ENCODE measurements at regions of chr6 and their contacts with region 1.

Region 1: DNA sequence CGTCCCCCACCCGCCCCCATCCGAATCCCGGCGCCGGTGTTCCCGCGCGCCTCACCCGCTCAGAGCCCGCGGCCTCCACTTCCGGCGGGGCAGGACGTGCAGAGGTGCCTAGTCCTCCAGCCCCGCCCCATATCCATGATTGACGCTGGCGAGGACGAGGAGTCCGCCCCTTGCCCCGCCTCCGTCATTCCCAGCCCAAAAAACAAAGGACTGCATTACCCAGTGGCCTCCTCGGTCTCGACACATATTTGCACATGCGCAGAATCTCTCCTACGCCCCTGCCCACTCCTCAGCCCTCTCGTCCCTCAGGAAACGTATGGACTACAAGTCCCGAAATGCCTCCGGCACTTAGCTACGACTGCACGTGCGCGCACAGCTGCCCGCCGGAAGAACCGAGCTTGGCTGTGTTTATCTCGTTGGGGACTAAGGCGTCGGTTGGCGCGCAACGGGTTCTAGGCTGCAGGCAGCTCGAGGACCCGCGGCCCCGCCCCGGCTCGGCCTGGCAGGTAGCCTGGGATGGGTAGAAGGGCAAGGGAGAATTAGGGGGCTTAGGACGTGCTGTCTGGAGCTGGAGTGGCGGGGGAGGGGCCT is at the starts of genes KLHDC3 and MEA1:
- DNase-seq: peak; percentile 97 to 100 (median 99)
- H3K4me3 ChIP-seq: peak within 1 kb of the TSS; percentile 81
- H3K4me3 Mint-ChIP-seq: peak within 1 kb of the TSS; percentile 86 to 96 (median 90)
- H3K27ac ChIP-seq: peak within 1 kb of the TSS; percentile 81
- H3K27ac Mint-ChIP-seq: peak within 1 kb of the TSS; percentile 59 to 97 (median 92)
- H3K4me1 ChIP-seq: peaks cover 42% of the 10 kb centered on the region
- H3K4me1 Mint-ChIP-seq: peaks cover 48 to 70% (median 54%) of the 10 kb centered on the region in 3 donors
- H3K27me3 ChIP-seq: no peaks in the 10 kb centered on the region
- H3K27me3 Mint-ChIP-seq: peaks cover 0 to 2% of the 10 kb centered on the region in 2 donors
- total RNA-seq, gene KLHDC3: 73.5 to 74.1 TPM
- total RNA-seq, gene MEA1: 102 to 108 TPM

Region 2: DNA sequence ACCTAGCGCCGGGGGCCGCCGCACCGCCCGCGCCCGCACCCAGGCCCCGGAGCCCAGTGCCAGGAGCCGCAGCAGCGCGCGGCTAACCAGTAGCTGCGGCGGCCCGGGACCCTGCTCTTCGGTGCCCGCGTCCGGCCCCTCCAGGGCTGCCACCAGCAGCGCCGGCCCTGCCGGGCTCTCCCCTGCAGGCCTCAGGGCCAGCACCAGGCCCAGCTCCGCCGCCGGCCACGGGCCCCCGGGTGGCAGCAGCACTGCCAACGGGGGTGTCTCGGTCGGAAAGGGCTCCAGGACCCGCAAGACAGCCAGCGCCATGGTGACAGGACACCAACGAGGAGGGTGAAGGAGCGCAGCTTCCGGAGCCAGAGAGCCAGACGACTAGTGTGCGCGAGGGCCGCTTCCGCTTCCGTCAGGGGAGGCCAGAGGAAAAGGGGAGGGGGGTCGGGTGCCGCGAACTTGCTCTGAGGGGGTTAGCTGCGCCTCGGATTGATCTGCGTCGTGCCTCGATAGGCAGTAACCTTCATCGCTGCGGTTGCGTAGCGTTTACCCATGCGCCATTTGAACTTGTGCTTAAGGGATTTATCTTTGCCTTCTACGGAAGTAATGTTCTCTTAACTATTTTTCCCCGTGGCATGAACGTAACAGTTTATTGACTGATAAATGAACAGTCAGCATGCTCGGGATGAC is 35.0 kb before region 1 on chr6 and contains the start of gene PEX6:
- CTCF ChIA-PET with region 1: interaction called, 10 read pairs
- POLR2A ChIA-PET with region 1: interaction called, 18 read pairs
- DNase-seq: peak; percentile 90 to 97 (median 94)
- H3K4me3 ChIP-seq: peak within 1 kb of the TSS; percentile 80
- H3K4me3 Mint-ChIP-seq: peak within 1 kb of the TSS; percentile 87 to 96 (median 94)
- H3K27ac ChIP-seq: peak within 1 kb of the TSS; percentile 79
- H3K27ac Mint-ChIP-seq: peak within 1 kb of the TSS; percentile 94 to 99 (median 97)
- H3K4me1 ChIP-seq: peaks cover 47% of the 10 kb centered on the region
- H3K4me1 Mint-ChIP-seq: peaks cover 36 to 61% (median 50%) of the 10 kb centered on the region in 3 donors
- H3K27me3 ChIP-seq: no peaks in the 10 kb centered on the region
- H3K27me3 Mint-ChIP-seq: no peaks in the 10 kb centered on the region
- total RNA-seq, gene PEX6: 19.2 to 20.6 TPM

Region 3: GRCh38 chr6:42984001-42984923 is 29.7 kb before region 1 on chr6 and contains the start of gene PPP2R5D:
- CTCF ChIA-PET with region 1: interaction called, 10 read pairs
- POLR2A ChIA-PET with region 1: interaction called, 18 read pairs
- DNase-seq: peak; percentile 93 to 98 (median 97)
- H3K4me3 ChIP-seq: peak within 1 kb of the TSS; percentile 88
- H3K4me3 Mint-ChIP-seq: peak within 1 kb of the TSS; percentile 82 to 96 (median 93)
- H3K27ac ChIP-seq: peak within 1 kb of the TSS; percentile 87
- H3K27ac Mint-ChIP-seq: peak within 1 kb of the TSS; percentile 90 to 98 (median 96)
- H3K4me1 ChIP-seq: peaks cover 53% of the 10 kb centered on the region
- H3K4me1 Mint-ChIP-seq: peaks cover 59 to 73% (median 60%) of the 10 kb centered on the region in 3 donors
- H3K27me3 ChIP-seq: no peaks in the 10 kb centered on the region
- H3K27me3 Mint-ChIP-seq: peaks cover 0 to 2% of the 10 kb centered on the region in 2 donors
- total RNA-seq, gene PPP2R5D: 52.2 to 52.4 TPM

Region 4: DNA sequence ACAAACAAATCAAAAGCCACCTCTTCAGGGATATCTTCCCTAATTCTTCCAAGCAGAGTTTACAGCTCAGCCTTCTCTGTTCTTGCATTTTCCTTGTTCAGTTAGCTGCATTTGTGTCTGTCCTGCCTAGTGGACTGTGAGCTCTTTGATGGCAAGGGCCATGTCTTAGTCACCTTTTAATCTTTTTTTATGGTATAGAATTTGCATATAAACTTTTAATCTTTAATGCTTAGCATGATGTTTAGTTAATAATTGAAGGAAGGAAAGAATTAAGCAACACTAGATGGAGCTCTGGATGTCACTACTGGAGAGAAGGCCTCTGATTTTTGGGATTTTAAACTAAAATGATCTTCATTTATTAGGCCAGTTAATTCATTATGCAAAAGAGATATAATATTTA is 17.4 kb before region 1 on chr6:
- CTCF ChIA-PET with region 1: no interaction called
- POLR2A ChIA-PET with region 1: no interaction called
- DNase-seq: no peak
- H3K4me3 ChIP-seq: no peak overlapping the region
- H3K4me3 Mint-ChIP-seq: no peak overlapping the region
- H3K27ac ChIP-seq: no peak overlapping the region
- H3K27ac Mint-ChIP-seq: peak overlapping the region in 4 of 8 donors; percentile 1 to 45 (median 38)
- H3K4me1 ChIP-seq: no peaks in the 10 kb centered on the region
- H3K4me1 Mint-ChIP-seq: peaks cover 10 to 22% (median 12%) of the 10 kb centered on the region in 3 donors
- H3K27me3 ChIP-seq: no peaks in the 10 kb centered on the region
- H3K27me3 Mint-ChIP-seq: no peaks in the 10 kb centered on the region

Region 5: GRCh38 chr6:43053545-43054205 is 39.7 kb after region 1 on chr6 and contains the start of gene CUL7:
- CTCF ChIA-PET with region 1: interaction called, 4 read pairs
- POLR2A ChIA-PET with region 1: interaction called, 24 read pairs
- DNase-seq: peak; percentile 85 to 93 (median 89)
- H3K4me3 ChIP-seq: peak within 1 kb of the TSS; percentile 55
- H3K4me3 Mint-ChIP-seq: peak within 1 kb of the TSS; percentile 89 to 97 (median 92)
- H3K27ac ChIP-seq: peak within 1 kb of the TSS; percentile 88
- H3K27ac Mint-ChIP-seq: peak within 1 kb of the TSS; percentile 93 to 100 (median 96)
- H3K4me1 ChIP-seq: peaks cover 27% of the 10 kb centered on the region
- H3K4me1 Mint-ChIP-seq: peaks cover 36 to 56% (median 55%) of the 10 kb centered on the region in 3 donors
- H3K27me3 ChIP-seq: no peaks in the 10 kb centered on the region
- H3K27me3 Mint-ChIP-seq: peaks cover 0 to 2% of the 10 kb centered on the region in 2 donors
- total RNA-seq, gene CUL7: 11.7 to 12.1 TPM

Region 6: DNA sequence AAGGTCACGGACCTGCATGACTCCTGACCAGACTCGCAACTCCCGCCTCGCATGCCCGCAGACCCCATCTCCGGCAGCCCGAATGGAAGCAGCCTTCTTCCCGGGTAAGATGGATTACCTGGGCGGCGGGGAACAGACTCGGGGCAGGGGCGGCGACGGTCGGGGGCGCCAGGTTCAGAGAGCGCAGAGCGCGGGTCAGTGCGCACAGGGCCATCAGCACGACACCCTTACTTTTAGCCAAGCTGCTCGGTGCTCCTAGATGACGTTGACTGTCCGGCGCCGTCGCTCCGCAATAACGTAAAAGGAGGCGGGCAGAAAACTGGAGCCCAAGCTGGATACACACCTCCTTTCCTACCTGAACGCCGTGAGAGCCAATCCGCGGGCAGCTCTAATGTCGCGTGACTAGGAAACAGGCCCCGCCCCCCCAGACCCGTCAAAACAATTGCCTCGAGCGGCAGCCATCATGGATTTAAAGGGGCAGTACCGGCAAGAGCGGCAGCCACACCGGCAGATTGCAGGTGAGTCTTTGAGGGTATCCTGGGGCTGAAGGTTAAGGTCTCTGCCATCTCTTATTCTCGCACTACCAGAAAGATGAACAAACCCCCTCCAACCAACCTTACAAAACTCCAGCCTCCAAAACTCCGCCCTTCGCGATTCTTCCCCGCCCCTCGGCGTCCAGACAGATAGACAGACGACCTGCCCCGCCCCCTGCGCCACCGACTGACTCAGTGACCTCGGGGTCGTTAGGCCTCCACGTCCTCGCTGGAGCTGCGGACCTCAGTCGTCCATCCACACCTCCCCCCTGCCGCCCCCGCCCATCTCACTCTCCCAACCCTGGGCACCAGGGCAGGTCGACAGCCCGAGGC is 45.5 kb after region 1 on chr6 and contains the starts of genes KLC4 and MRPL2:
- CTCF ChIA-PET with region 1: interaction called, 4 read pairs
- POLR2A ChIA-PET with region 1: interaction called, 24 read pairs
- DNase-seq: peak; percentile 95 to 97 (median 96)
- H3K4me3 ChIP-seq: peak within 1 kb of the TSS; percentile 93
- H3K4me3 Mint-ChIP-seq: peak within 1 kb of the TSS; percentile 95 to 99 (median 98)
- H3K27ac ChIP-seq: peak within 1 kb of the TSS; percentile 94
- H3K27ac Mint-ChIP-seq: peak within 1 kb of the TSS; percentile 98 to 100 (median 100)
- H3K4me1 ChIP-seq: peaks cover 23% of the 10 kb centered on the region
- H3K4me1 Mint-ChIP-seq: peaks cover 32 to 54% (median 50%) of the 10 kb centered on the region in 3 donors
- H3K27me3 ChIP-seq: no peaks in the 10 kb centered on the region
- H3K27me3 Mint-ChIP-seq: no peaks in the 10 kb centered on the region
- total RNA-seq, gene KLC4: 11.1 to 12.3 TPM
- total RNA-seq, gene MRPL2: 89.6 to 91.6 TPM

Region 7: DNA sequence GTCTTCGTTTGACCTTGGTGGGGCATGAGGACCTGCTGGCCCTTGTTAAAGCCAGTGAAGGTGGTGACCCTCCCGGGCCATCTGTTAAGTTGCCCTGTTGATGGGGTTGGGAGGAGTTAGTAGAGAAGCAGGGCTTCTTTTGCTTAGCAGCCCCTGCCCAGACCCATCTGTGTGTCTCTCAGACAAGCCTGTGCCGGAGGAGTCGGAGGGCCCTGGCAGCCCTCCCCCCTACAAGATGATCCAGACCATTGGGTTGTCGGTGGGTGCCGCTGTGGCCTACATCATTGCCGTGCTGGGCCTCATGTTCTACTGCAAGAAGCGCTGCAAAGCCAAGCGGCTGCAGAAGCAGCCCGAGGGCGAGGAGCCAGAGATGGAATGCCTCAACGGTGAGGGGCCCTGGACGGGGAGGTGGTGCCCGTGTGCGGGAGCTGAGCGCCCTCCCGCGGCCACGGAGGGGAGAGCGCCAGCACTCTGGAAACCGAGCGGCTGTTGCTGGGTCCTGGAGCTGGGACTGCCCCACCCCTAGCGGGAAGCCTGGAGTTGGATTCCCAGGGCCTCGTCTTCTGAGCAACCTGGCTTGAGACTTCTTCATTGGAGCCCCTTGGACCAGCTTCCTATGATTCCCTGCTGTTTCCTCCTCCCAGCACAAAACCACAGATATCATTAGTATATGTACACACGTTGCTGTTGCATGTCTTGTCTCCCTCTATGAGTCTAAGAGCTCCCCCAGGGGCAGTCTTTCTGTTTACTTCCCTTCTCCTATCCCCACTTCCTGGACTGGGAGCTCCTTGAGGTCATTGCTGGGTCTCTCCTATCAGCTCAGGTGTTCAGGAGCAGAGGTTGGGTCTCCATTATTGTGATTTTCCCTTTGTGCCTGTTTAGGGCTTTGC is 129.5 kb after region 1 on chr6:
- CTCF ChIA-PET with region 1: interaction called, 17 read pairs
- POLR2A ChIA-PET with region 1: no interaction called
- DNase-seq: peak; percentile 64 to 86 (median 73)
- H3K4me3 ChIP-seq: peak overlapping the region; percentile 29
- H3K4me3 Mint-ChIP-seq: peak overlapping the region; percentile 43 to 81 (median 65)
- H3K27ac ChIP-seq: no peak overlapping the region
- H3K27ac Mint-ChIP-seq: peak overlapping the region in 7 of 8 donors; percentile 13 to 91 (median 75)
- H3K4me1 ChIP-seq: peaks cover 21% of the 10 kb centered on the region
- H3K4me1 Mint-ChIP-seq: peaks cover 21 to 27% (median 26%) of the 10 kb centered on the region in 3 donors
- H3K27me3 ChIP-seq: no peaks in the 10 kb centered on the region
- H3K27me3 Mint-ChIP-seq: peaks cover 2 to 6% of the 10 kb centered on the region in 2 donors

Region 8: DNA sequence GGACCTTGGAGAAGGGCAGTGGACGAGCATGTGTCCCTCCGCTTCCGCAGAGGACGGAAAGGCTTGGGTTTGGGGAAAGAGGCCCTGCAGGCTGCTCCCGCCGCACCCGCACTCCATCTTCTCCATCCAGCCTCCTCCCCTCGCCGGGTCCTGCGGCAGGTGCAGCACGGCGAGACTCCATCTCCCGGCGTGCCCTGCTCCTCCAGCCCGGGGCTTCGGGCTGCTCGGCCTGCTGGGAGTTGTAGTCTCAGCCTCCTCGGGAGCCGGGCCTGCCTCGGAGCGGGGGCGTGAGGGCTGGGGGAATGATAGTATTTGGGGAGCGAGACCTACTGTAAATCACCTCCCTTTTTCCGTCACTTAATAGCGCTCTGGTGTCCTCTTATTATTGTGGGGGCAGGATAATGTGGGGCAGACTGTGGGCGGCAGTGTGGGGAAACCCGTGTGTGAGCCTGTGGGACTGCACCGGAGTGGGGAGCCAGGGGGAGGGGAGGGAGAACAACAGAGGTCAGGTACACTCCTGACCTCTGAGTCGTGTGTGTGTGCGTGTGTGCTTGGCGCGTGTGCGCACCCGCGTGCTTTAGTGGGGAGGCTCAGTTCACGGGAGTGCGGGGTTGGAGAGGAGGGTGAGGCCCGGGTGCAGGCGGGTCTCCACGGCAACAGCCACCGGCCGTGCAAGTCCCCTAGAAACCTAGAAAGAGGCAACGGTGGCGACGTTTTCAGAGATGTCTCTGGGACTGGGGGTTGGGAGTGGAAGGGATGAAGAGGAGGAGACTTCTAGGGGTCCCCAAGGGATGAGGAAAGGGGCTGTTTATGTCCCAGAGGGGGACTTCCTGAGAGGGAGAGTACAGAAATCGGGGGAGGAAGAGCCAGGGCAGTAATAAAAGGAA is 233.4 kb after region 1 on chr6:
- CTCF ChIA-PET with region 1: no interaction called
- POLR2A ChIA-PET with region 1: no interaction called
- DNase-seq: peak; percentile 66 to 85 (median 70)
- H3K4me3 ChIP-seq: peak overlapping the region; percentile 87
- H3K4me3 Mint-ChIP-seq: peak overlapping the region; percentile 86 to 93 (median 89)
- H3K27ac ChIP-seq: peak overlapping the region; percentile 35
- H3K27ac Mint-ChIP-seq: peak overlapping the region; percentile 79 to 95 (median 90)
- H3K4me1 ChIP-seq: peaks cover 12% of the 10 kb centered on the region
- H3K4me1 Mint-ChIP-seq: peaks cover 10 to 19% (median 13%) of the 10 kb centered on the region in 3 donors
- H3K27me3 ChIP-seq: peaks cover 28% of the 10 kb centered on the region
- H3K27me3 Mint-ChIP-seq: peaks cover 10 to 15% of the 10 kb centered on the region in 2 donors

Measured in CD8-positive, alpha-beta memory T cell (primary cell).